ENCODE measurements at regions of chr6 and their contacts with region 1.

Region 1: GRCh38 chr6:97203343-97203742 is 79.7 kb downstream of the MMS22L start:
- DNase-seq: no peak
- H3K4me3 Mint-ChIP-seq: no peak overlapping the region
- H3K27ac Mint-ChIP-seq: no peak overlapping the region
- H3K4me1 Mint-ChIP-seq: no peaks in the 10 kb centered on the region
- H3K27me3 Mint-ChIP-seq: no peaks in the 10 kb centered on the region

Region 2: GRCh38 chr6:97246842-97247241 is 43.5 kb after region 1 on chr6:
- intact Hi-C with region 1: loop called (anchors 1 kb)
- DNase-seq: no peak
- H3K4me3 Mint-ChIP-seq: no peak overlapping the region
- H3K27ac Mint-ChIP-seq: no peak overlapping the region
- H3K4me1 Mint-ChIP-seq: no peaks in the 10 kb centered on the region
- H3K27me3 Mint-ChIP-seq: no peaks in the 10 kb centered on the region

Measured in activated T-helper 1 cell treated with anti-CD3 and anti-CD28 coated beads, Interleukin-12 subunit alpha, Interleukin-12 subunit beta, Interleukin-2, Interleukin-4 antibody, amounts not matched to agents 30 ng/mL and 10 ng/mL and 1 ng/mL, durations not matched to agents 14 hours and 24 hours and 36 hours (primary cell).